ENCODE measurements at regions of chr12 and their contacts with region 1.

Region 1: GRCh38 chr12:92178340-92178739 is 32.7 kb upstream of the BTG1 start:
- DNase-seq: no peak
- ATAC-seq: no peak
- H3K4me3 ChIP-seq: no peak overlapping the region
- H3K4me3 Mint-ChIP-seq: no peak overlapping the region
- H3K27ac ChIP-seq: no peak overlapping the region
- H3K27ac Mint-ChIP-seq: peak overlapping the region; percentile 47
- H3K4me1 ChIP-seq: peaks cover 3 to 9% of the 10 kb centered on the region in 2 donors
- H3K4me1 Mint-ChIP-seq: peaks cover 28% of the 10 kb centered on the region
- H3K27me3 ChIP-seq: no peaks in the 10 kb centered on the region
- H3K27me3 Mint-ChIP-seq: no peaks in the 10 kb centered on the region
- CTCF ChIP-seq: no peak

Region 2: DNA sequence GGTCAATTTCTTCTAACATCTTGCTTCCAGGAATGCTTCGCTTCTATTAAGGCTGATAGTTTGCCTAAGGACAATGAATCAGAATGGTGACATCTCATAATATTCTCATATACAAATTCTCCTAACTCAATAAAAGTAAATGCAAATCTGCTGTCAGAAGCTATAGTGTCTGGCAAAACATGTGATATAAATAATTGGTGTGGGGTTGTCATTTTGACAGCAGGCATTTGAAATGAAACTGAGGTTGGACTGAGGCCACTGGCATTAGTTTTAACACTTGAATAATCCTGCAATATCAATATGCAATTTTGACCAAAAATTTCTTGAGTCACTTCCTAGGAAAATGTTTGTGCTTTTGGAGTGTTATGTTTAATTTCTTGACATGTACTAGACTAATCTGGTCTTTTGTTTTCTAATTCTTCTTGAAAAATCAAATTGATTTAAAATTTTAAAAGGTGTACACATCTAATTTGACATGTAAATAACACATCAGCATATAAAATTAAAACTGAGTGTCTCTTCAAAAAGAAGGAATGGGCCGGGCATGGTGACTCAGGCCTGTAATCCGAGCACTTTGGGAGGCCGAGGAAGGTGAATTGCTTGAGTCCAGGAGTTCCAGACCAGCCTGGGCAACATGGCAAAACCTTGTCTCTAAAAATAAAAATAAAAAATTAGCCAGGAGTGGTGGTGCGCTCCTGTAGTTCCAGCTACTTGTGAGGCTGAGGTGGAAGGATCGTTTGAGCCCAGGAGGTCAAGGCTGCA is 59.6 kb after region 1 on chr12:
- CTCF ChIA-PET with region 1: no interaction called
- POLR2A ChIA-PET with region 1: no interaction called
- intact Hi-C with region 1: loop called (anchors 2 kb)
- DNase-seq: no peak
- ATAC-seq: no peak
- H3K4me3 ChIP-seq: no peak overlapping the region
- H3K4me3 Mint-ChIP-seq: no peak overlapping the region
- H3K27ac ChIP-seq: no peak overlapping the region
- H3K27ac Mint-ChIP-seq: no peak overlapping the region
- H3K4me1 ChIP-seq: peaks cover 2 to 3% of the 10 kb centered on the region in 2 donors
- H3K4me1 Mint-ChIP-seq: peaks cover 10% of the 10 kb centered on the region
- H3K27me3 ChIP-seq: no peaks in the 10 kb centered on the region
- H3K27me3 Mint-ChIP-seq: no peaks in the 10 kb centered on the region
- CTCF ChIP-seq: no peak